Activated CD4-positive, alpha-beta T cell treated with anti-CD3 and anti-CD28 coated beads for 36 hours (primary cell): ENCODE measurements at regions of chr15 and their contacts with region 1.

Region 1: GRCh38 chr15:82985688-82986441 is at the start of gene RAMAC:
- DNase-seq: peak; percentile 96
- ATAC-seq: peak; percentile 94
- H3K4me3 Mint-ChIP-seq: peak within 1 kb of the TSS; percentile 98
- H3K27ac Mint-ChIP-seq: peak within 1 kb of the TSS; percentile 98
- H3K4me1 Mint-ChIP-seq: peaks cover 21% of the 10 kb centered on the region
- H3K27me3 Mint-ChIP-seq: no peaks in the 10 kb centered on the region
- total RNA-seq, gene RAMAC: 17.3 to 19.5 TPM

Region 2: DNA sequence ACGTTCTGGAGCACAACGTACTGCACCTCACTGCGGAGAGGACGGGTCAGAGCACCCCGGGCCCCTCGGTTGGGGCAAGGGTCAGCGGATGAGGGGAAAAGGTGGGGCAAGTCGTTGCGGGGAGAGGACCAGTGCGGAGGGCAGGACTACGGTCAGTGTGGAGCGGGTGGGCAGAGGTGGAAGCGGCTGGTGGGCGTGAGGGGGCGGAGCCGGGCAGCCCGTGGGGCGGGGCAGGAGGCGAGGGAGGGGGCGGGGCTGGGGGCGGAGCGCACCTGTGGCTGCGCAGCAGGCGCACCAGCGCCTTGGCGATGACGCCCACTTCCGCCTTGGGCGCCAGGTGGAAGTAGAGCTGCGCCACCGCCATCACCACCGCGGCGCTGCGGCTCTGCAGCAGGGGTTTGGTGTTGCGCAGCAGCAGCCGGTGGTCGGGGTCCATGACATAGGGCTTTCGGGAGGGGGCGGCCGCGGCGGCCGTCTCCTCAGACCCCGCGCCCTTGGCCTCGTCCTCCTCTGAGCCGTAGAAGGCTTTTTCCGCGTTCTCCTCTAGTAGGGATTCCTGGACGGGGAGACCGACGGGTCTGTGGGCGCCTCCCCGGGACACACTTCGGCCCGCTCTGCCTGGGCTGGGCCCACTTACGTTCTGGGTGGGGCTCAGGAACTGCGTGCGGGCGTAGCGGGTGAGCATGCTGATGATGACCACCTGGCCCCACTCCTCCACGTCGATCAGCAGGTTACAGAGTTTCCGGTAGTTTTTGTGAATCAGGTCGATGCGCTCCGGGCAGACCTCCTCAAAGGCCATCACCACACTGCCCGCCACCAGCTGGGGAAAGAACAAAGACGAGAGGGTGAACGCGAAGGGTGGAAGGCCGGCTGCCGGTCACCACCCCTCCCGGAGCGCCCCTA is 305.4 kb before region 1 on chr15:
- CTCF ChIA-PET with region 1: no interaction called
- POLR2A ChIA-PET with region 1: no interaction called
- intact Hi-C with region 1: loop called in 1 of 2 experiments (anchors 1 kb)
- DNase-seq: peak; percentile 90
- ATAC-seq: peak; percentile 96
- H3K4me3 Mint-ChIP-seq: peak overlapping the region; percentile 80
- H3K27ac Mint-ChIP-seq: peak overlapping the region; percentile 85
- H3K4me1 Mint-ChIP-seq: peaks cover 10% of the 10 kb centered on the region
- H3K27me3 Mint-ChIP-seq: peaks cover 7% of the 10 kb centered on the region

Region 3: GRCh38 chr15:82749951-82750830 is 235.7 kb before region 1 on chr15:
- CTCF ChIA-PET with region 1: no interaction called
- POLR2A ChIA-PET with region 1: no interaction called
- intact Hi-C with region 1: loop called in 1 of 2 experiments (anchors 1 kb)
- DNase-seq: peak; percentile 91
- ATAC-seq: peak; percentile 95
- H3K4me3 Mint-ChIP-seq: peak overlapping the region; percentile 86
- H3K27ac Mint-ChIP-seq: peak overlapping the region; percentile 98
- H3K4me1 Mint-ChIP-seq: peaks cover 44% of the 10 kb centered on the region
- H3K27me3 Mint-ChIP-seq: no peaks in the 10 kb centered on the region

Region 4: DNA sequence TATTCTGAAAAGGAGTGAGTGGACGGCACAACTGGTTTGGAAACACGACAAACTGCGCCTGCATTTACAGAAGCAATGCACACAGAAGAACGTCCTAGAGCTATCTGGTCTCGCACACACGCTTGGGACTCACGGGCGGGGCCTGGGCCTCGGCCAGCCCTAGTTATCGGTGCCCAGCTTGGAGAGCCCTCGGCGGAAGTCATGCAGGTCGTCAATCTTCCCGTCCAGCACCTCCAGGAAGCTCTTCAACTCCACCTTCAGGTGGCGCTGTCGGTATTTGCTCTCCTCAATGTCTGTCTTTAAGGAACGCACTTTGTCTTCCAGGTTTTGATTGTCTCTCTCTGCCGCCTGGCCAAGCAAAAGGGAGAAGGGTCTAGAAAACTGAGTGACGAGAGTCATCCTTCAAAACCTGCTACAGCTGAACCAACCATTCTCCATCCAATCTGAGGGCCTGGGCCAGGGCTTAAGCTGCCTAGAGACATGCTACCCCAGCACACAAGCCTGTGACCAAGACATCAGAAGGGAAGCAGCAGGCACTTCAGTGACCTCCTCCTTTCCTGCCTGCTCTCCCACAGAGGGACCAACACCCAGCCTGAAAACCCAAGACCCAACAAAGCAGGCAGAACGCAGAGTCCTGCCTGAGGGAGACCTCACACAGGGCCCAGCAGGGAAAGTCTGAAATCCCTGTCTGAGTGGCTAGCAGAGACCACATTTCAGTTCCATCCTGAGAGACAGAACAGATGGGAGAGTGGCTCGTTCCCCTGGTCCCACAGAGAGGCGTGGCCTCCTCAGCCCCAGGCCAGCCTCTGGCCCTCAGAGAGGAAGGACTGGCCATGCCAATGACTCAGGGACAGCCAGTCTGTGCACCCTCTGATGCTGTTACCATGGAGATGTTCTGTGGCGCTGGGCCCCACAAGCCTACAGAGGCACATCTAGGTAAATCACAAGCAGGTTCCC is 136.0 kb before region 1 on chr15:
- CTCF ChIA-PET with region 1: interaction called, 6 read pairs
- POLR2A ChIA-PET with region 1: no interaction called
- intact Hi-C with region 1: loop called (anchors 5 kb)
- DNase-seq: peak; percentile 80
- ATAC-seq: peak; percentile 75
- H3K4me3 Mint-ChIP-seq: no peak overlapping the region
- H3K27ac Mint-ChIP-seq: no peak overlapping the region
- H3K4me1 Mint-ChIP-seq: peaks cover 18% of the 10 kb centered on the region
- H3K27me3 Mint-ChIP-seq: peaks cover 2% of the 10 kb centered on the region

Region 5: GRCh38 chr15:82999905-83000671 is 14.2 kb after region 1 on chr15:
- CTCF ChIA-PET with region 1: interaction called, 10 read pairs
- POLR2A ChIA-PET with region 1: no interaction called
- intact Hi-C with region 1: no loop called
- DNase-seq: peak; percentile 41
- ATAC-seq: peak; percentile 89
- H3K4me3 Mint-ChIP-seq: peak overlapping the region; percentile 53
- H3K27ac Mint-ChIP-seq: peak overlapping the region; percentile 63
- H3K4me1 Mint-ChIP-seq: peaks cover 6% of the 10 kb centered on the region
- H3K27me3 Mint-ChIP-seq: no peaks in the 10 kb centered on the region